ENCODE measurements at regions of chr7 and their contacts with region 1.

Region 1: DNA sequence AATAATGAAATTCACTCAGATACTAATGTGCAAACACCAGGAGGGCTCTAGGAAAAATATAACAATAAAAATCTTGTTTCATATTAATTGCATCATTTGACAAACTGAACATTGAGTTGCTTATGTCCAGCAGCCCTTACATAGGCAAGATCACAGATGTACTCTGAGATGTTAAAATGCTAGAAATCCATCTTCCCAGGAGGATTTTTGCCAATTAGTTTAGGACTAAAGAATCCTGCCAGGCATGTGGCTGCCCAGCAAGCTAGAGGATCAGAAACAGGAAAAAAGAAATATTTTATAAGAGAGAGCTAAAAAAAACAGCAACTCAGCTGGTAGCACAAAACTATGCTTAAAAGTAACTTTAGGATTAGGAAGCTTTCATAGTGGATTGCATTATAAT is 407.8 kb downstream of the NXPH1 start:
- DNase-seq: no peak
- ATAC-seq: no peak
- H3K4me3 ChIP-seq: no peak overlapping the region
- H3K4me3 Mint-ChIP-seq: no peak overlapping the region
- H3K27ac ChIP-seq: no peak overlapping the region
- H3K27ac Mint-ChIP-seq: no peak overlapping the region
- H3K4me1 ChIP-seq: no peaks in the 10 kb centered on the region
- H3K4me1 Mint-ChIP-seq: no peaks in the 10 kb centered on the region
- H3K27me3 ChIP-seq: no peaks in the 10 kb centered on the region
- H3K27me3 Mint-ChIP-seq: no peaks in the 10 kb centered on the region

Region 2: GRCh38 chr7:9022456-9022855 is 181.3 kb after region 1 on chr7:
- CTCF ChIA-PET with region 1: interaction called in 1 of 2 experiments, 11 read pairs
- POLR2A ChIA-PET with region 1: no interaction called
- DNase-seq: no peak
- ATAC-seq: no peak
- H3K4me3 ChIP-seq: no peak overlapping the region
- H3K4me3 Mint-ChIP-seq: no peak overlapping the region
- H3K27ac ChIP-seq: no peak overlapping the region
- H3K27ac Mint-ChIP-seq: no peak overlapping the region
- H3K4me1 ChIP-seq: no peaks in the 10 kb centered on the region
- H3K4me1 Mint-ChIP-seq: no peaks in the 10 kb centered on the region
- H3K27me3 ChIP-seq: no peaks in the 10 kb centered on the region
- H3K27me3 Mint-ChIP-seq: no peaks in the 10 kb centered on the region

Measured in T-cell (primary cell).